Left colon (tissue), 2 donors: ENCODE measurements at regions of chr20 and their contacts with region 1.

Region 1: GRCh38 chr20:57498425-57499400 is 26.2 kb downstream of the CTCFL start:
- DNase-seq: peak in 1 of 2 donors; percentile 70
- ATAC-seq: peak; percentile 81

Region 2: DNA sequence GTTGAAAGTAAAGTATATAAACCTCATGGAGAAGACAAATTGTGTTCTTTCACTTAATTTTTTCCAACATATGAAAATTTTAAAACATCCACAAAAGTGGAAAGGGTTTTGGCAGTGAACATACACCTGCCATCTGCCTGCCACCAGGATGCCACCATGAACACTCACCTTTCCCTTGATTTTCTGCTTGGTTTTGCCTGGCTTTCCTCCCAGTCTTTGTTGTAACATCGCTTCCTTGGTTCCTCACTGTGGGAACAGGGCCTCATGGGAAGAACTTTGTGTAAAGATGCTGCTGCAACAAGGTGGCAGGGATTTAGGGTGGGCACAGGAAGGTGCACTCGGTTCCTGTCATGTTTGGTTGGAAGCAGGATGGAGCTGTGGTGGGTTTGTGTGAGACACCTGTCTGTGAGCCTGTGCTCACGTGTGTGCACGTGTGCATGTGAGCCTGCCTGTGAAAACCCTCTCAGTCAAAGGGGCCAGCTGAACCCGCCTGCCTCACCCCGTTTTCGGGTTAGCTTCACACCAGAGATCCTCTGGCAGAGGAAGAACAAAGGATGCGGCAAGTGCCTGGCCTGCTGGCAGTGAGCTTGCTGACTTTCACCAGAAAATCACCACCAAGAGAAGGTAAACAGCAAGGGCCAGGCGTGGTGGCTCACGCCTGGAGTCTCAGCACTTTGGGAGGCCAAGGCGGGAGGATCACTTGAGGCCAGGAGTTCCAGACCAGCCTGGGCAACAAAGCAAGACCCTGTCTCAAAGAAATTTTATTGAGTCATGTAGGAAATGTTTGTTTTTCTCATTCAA is 118.4 kb before region 1 on chr20:
- intact Hi-C with region 1: loop called in 1 of 2 experiments (anchors 2 kb)
- DNase-seq: no peak
- ATAC-seq: no peak

Region 3: DNA sequence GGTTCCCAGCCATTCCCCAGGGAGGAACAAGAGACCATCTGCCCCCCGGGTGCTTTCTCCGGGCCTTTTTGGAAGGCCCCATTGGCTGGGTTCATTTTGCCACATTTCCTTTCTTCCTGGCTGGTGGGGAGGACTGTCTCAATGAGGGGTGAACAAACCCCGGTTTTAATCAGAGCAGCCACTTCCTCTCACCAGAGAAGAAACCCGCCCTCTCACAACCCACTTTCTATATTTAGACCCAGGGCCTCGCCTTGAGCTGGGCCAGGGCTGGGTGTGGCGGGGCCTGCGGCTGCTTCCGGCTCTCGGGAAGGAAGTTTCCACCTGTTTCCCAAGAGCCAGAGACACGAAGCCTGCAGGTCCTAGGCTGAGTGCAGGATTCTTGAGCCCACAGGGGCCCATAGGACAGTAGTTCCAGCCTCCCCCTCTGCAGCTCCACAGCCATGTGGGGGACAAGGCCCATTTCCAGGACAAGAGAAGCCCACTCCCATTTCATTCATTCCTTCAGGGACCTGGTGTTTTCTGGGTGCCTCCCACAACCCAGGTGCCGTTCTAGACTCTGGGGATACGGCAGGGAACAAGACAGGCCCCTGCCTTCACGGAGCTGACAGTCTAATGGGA is 65.7 kb before region 1 on chr20:
- intact Hi-C with region 1: loop called in 1 of 2 experiments (anchors 10 kb)
- DNase-seq: peak; percentile 82 to 84
- ATAC-seq: peak; percentile 91